B cell (primary cell): ENCODE measurements at regions of chr1 and their contacts with region 1.

Region 1: DNA sequence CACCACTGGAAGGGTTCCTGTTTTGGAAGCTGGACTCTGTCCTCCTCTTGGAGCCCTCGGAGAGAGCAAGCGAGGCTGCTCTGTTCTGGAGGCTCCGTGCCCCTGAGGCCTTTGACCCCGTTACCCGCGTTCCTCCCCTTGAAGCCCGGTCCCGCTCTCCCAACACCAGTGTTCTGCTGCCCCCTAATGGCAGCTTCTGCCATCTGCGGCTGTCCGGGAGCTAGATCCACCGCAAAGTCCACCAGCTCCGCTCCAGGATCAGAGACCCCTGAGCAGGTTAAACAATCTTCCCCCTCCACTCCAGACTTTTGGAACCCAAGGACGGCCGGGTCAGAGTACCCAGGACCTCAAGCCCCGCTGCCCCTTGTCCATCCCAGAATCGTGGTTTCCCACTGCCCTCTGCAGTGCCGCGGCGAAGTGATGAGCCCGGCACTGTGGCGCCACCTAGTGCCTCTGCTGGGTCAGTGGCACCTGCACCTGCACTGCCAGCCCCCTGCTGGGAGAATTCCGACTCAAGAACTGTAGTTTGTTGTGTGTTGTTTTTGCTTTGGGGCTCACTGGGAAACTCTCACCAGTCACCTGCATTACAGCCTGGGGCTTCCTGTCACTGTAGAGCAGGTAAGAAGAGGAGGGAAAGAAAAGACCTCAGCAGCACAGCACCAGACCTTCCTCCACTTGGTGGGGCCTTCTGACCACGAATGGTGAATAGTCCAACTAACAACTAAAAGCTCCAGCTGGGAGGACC is 63.5 kb upstream of the NFASC start:
- DNase-seq: peak; percentile 94
- ATAC-seq: peak; percentile 95
- H3K4me3 ChIP-seq: peak overlapping the region in 4 of 5 experiments; percentile 29 to 73 (median 56)
- H3K4me3 Mint-ChIP-seq: peak overlapping the region; percentile 87
- H3K27ac ChIP-seq: no peak overlapping the region
- H3K27ac Mint-ChIP-seq: peak overlapping the region; percentile 70
- H3K4me1 ChIP-seq: peaks cover 15 to 22% of the 10 kb centered on the region in 2 donors
- H3K4me1 Mint-ChIP-seq: peaks cover 18% of the 10 kb centered on the region
- H3K27me3 ChIP-seq: no peaks in the 10 kb centered on the region
- H3K27me3 Mint-ChIP-seq: peaks cover 3% of the 10 kb centered on the region
- CTCF ChIP-seq: peak; percentile 100

Region 2: DNA sequence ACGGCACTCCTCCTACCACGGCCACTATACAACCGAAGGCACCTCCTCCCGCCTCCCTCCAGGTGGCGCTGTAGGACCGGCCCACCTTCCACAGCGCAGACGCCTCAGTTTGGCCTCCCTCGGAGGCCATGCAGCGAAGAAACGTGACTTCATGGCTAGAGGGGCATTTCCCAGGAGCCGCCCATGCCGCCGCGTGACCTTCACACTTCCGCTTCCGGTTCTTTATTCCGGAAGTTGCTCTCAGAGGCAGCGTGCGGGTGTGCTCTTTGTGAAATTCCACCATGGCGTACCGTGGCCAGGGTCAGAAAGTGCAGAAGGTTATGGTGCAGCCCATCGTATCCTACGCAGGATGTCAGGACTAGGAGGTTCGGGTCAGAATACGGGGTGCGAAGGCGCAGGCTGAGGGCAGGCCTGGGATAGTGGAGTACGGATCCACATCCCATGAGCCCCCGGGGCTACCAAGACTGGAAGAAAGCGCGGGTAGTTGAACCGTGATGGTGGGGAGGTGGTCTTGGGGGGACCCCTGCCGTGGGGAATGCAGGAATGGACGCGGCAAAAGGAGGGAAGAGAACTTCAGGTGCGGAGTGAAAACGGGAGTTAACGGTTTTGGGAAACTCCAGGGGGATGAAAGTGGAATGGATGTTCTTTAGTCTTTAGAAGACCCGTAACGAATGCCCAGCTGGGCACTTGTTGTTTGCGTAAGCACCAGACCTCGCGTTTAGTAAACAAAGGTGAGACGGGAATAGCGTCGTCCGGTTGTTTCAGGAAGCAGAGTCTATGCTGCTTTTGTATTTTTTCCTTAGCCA is 945.5 kb before region 1 on chr1 and contains the start of gene SNRPE:
- CTCF ChIA-PET with region 1: no interaction called
- POLR2A ChIA-PET with region 1: no interaction called
- intact Hi-C with region 1: loop called (anchors 2 kb)
- DNase-seq: peak; percentile 98
- ATAC-seq: peak; percentile 99
- H3K4me3 ChIP-seq: peak within 1 kb of the TSS; percentile 82 to 99 (median 96)
- H3K4me3 Mint-ChIP-seq: peak within 1 kb of the TSS; percentile 98
- H3K27ac ChIP-seq: peak within 1 kb of the TSS; percentile 57 to 81
- H3K27ac Mint-ChIP-seq: peak within 1 kb of the TSS; percentile 96
- H3K4me1 ChIP-seq: peaks cover 9 to 17% of the 10 kb centered on the region in 2 donors
- H3K4me1 Mint-ChIP-seq: peaks cover 21% of the 10 kb centered on the region
- H3K27me3 ChIP-seq: no peaks in the 10 kb centered on the region
- H3K27me3 Mint-ChIP-seq: no peaks in the 10 kb centered on the region
- CTCF ChIP-seq: peak; percentile 93
- total RNA-seq, gene SNRPE: 56.0 and 80.8 TPM in 2 replicates

Region 3: DNA sequence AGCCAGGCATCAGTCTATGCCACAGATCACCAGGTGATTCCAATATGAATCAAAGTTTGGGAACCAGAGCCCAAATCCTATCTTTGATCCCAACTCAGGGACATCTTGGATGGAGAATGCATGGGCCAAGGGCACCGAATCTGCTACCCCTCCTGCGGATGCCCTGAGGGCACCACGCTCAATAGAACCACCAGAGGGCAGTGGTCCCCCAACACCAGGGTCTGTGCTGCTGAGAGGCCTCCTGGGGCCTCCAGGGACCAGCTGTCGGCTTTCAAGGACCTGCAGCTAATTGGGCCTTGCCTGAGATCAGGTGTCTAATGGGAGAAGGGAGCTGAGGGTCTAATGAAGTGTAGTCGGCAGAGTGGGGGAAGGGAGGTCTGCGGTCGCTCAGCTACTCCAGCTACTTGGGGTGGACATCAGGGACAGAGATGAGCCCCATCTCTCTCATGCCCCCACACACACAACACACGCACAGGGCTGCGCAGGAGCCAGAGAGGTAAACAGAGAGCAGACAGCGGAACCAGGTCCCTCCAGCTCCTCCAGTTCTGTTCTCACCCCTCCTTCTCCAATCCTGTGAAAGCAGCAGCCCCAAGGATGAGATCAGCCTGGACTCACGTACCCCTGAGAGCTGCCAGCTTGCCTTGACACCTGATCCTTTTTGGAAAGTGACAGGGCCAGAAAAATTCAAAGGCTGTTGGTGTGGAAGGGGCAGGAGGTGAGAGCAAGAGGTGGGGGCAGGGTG is 360.6 kb before region 1 on chr1:
- CTCF ChIA-PET with region 1: interaction called, 25 read pairs
- POLR2A ChIA-PET with region 1: no interaction called
- intact Hi-C with region 1: loop called (anchors 5 kb)
- DNase-seq: peak; percentile 90
- ATAC-seq: peak; percentile 88
- H3K4me3 ChIP-seq: no peak overlapping the region
- H3K4me3 Mint-ChIP-seq: peak overlapping the region; percentile 52
- H3K27ac ChIP-seq: peak overlapping the region; percentile 27 to 64
- H3K27ac Mint-ChIP-seq: peak overlapping the region; percentile 81
- H3K4me1 ChIP-seq: peaks cover 57 to 59% of the 10 kb centered on the region in 2 donors
- H3K4me1 Mint-ChIP-seq: peaks cover 58% of the 10 kb centered on the region
- H3K27me3 ChIP-seq: no peaks in the 10 kb centered on the region
- H3K27me3 Mint-ChIP-seq: no peaks in the 10 kb centered on the region
- CTCF ChIP-seq: peak; percentile 89

Region 4: GRCh38 chr1:204516180-204516879 is 290.8 kb before region 1 on chr1 and contains the start of gene MDM4:
- CTCF ChIA-PET with region 1: interaction called, 12 read pairs
- POLR2A ChIA-PET with region 1: no interaction called
- intact Hi-C with region 1: no loop called
- DNase-seq: peak; percentile 97
- ATAC-seq: peak; percentile 78
- H3K4me3 ChIP-seq: peak within 1 kb of the TSS; percentile 75 to 96 (median 91)
- H3K4me3 Mint-ChIP-seq: no peak within 1 kb of the TSS
- H3K27ac ChIP-seq: peak within 1 kb of the TSS; percentile 95 to 97
- H3K27ac Mint-ChIP-seq: no peak within 1 kb of the TSS
- H3K4me1 ChIP-seq: peaks cover 83 to 92% of the 10 kb centered on the region in 2 donors
- H3K4me1 Mint-ChIP-seq: peaks cover 68% of the 10 kb centered on the region
- H3K27me3 ChIP-seq: no peaks in the 10 kb centered on the region
- H3K27me3 Mint-ChIP-seq: no peaks in the 10 kb centered on the region
- CTCF ChIP-seq: no peak
- total RNA-seq, gene MDM4: 374 and 378 TPM in 2 replicates

Region 5: GRCh38 chr1:204558467-204558866 is 248.6 kb before region 1 on chr1:
- CTCF ChIA-PET with region 1: interaction called, 221 read pairs
- POLR2A ChIA-PET with region 1: no interaction called
- intact Hi-C with region 1: no loop called
- DNase-seq: peak; percentile 26
- ATAC-seq: no peak
- H3K4me3 ChIP-seq: no peak overlapping the region
- H3K4me3 Mint-ChIP-seq: no peak overlapping the region
- H3K27ac ChIP-seq: no peak overlapping the region
- H3K27ac Mint-ChIP-seq: no peak overlapping the region
- H3K4me1 ChIP-seq: peaks cover 9 to 20% of the 10 kb centered on the region in 2 donors
- H3K4me1 Mint-ChIP-seq: peaks cover 42% of the 10 kb centered on the region
- H3K27me3 ChIP-seq: no peaks in the 10 kb centered on the region
- H3K27me3 Mint-ChIP-seq: no peaks in the 10 kb centered on the region
- CTCF ChIP-seq: no peak

Region 6: DNA sequence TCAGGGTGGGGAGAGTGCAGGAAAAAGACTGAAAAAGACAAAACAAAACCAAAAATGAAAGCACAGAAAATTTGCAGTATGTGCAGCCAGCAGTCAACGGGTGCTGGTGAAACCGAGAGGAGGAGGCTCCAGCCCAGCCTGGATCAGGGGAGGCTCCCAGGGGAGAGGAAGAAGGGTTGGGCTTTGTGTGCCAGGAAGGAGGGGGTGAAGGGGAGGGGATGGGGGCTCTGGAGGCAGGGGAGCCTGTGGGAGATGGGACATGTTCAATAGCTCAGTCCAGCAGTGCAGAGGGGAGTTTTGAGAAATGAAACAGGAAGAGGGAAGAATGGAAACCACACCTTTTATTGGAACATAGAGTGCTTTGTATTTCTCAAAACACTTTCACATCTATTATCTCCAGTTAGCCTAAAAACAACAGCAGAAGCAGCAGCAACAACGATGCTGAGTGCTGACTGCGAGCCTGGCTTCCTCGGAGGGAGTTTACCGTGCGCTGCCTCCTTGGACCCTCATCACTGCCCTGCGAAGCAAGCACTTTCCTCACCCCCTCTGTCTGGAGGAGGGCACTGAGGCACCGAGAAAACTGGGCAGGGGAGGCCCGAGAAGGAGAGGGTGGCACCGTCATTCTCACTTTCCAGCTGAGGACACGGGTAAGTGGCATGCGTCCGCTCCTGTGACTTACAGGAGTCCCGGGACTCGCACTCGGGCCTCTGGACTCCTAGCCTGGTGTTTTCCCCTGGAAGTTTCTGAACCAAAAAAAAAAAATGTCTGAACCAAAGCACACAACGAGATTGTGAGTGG is 228.0 kb before region 1 on chr1:
- CTCF ChIA-PET with region 1: interaction called, 17 read pairs
- POLR2A ChIA-PET with region 1: no interaction called
- intact Hi-C with region 1: no loop called
- DNase-seq: peak; percentile 60
- ATAC-seq: peak; percentile 73
- H3K4me3 ChIP-seq: peak overlapping the region in 4 of 5 experiments; percentile 41 to 68 (median 48)
- H3K4me3 Mint-ChIP-seq: peak overlapping the region; percentile 83
- H3K27ac ChIP-seq: peak overlapping the region; percentile 79 to 81
- H3K27ac Mint-ChIP-seq: peak overlapping the region; percentile 90
- H3K4me1 ChIP-seq: peaks cover 41 to 46% of the 10 kb centered on the region in 2 donors
- H3K4me1 Mint-ChIP-seq: peaks cover 50% of the 10 kb centered on the region
- H3K27me3 ChIP-seq: no peaks in the 10 kb centered on the region
- H3K27me3 Mint-ChIP-seq: no peaks in the 10 kb centered on the region
- CTCF ChIP-seq: no peak

Region 7: DNA sequence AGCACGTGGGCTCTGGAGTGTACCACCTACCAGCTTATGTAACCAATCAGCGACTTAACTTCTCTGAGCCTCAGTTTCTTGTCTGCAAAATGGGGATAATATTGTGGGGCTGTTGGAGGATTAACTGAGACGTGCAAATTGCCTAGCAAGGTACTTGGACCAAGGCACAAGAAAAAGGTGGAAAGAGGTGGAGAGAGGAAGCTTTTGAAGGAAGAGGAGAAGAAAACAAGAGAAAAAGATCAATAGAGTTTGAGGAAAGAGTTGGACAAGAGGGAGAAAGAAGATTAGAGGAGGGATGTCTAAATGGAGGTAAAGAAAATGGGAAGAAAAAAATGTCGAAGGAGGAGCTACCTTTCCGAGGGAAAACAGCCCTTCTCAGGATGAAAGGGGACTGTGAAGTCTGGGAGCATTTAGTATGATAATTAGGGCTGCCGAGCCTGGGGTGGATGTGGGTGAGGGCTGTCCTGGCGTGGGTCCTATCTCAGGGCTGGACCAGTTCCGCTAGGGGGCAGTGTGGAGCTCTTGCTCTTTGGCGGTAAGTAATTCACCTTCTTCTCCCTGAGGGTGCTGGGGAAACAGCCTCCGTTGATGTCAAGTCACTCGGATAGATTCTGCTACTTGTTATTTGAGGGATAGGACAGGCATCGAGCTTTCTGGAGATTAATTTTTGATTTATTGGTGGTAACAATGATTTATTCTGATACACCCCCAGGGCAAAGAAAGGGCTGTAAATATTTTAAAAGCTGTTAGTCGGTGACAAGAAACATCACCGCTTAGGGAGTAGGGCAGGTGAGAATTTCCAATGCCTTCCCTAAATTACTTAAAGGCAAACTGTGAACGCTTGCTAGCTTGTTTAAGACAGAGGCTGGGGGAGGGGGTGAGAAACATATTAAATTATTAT is 15.4 kb before region 1 on chr1:
- CTCF ChIA-PET with region 1: interaction called, 148 read pairs
- POLR2A ChIA-PET with region 1: no interaction called
- intact Hi-C with region 1: loop called (anchors 1 kb)
- DNase-seq: peak; percentile 82
- ATAC-seq: peak; percentile 85
- H3K4me3 ChIP-seq: no peak overlapping the region
- H3K4me3 Mint-ChIP-seq: no peak overlapping the region
- H3K27ac ChIP-seq: no peak overlapping the region
- H3K27ac Mint-ChIP-seq: no peak overlapping the region
- H3K4me1 ChIP-seq: no peaks in the 10 kb centered on the region
- H3K4me1 Mint-ChIP-seq: peaks cover 2% of the 10 kb centered on the region
- H3K27me3 ChIP-seq: peaks cover 0 to 16% (median 8%) of the 10 kb centered on the region in 4 experiments
- H3K27me3 Mint-ChIP-seq: peaks cover 39% of the 10 kb centered on the region
- CTCF ChIP-seq: peak; percentile 96